ENCODE measurements at regions of chr9 and their contacts with region 1.

Region 1: GRCh38 chr9:19230356-19231125 is at the start of gene DENND4C:
- DNase-seq: peak; percentile 87
- ATAC-seq: peak; percentile 81
- H3K4me3 Mint-ChIP-seq: no peak within 1 kb of the TSS
- H3K27ac Mint-ChIP-seq: peak within 1 kb of the TSS; percentile 58
- H3K4me1 Mint-ChIP-seq: peaks cover 14% of the 10 kb centered on the region
- H3K27me3 Mint-ChIP-seq: no peaks in the 10 kb centered on the region
- total RNA-seq, gene DENND4C: 17.2 to 22.2 TPM

Region 2: GRCh38 chr9:19057033-19057432 is 173.5 kb before region 1 on chr9:
- CTCF ChIA-PET with region 1: no interaction called
- POLR2A ChIA-PET with region 1: interaction called, 15 read pairs
- intact Hi-C with region 1: no loop called
- DNase-seq: no peak
- ATAC-seq: no peak
- H3K4me3 Mint-ChIP-seq: no peak overlapping the region
- H3K27ac Mint-ChIP-seq: no peak overlapping the region
- H3K4me1 Mint-ChIP-seq: peaks cover 8% of the 10 kb centered on the region
- H3K27me3 Mint-ChIP-seq: no peaks in the 10 kb centered on the region

Region 3: GRCh38 chr9:19154135-19154612 is 76.4 kb before region 1 on chr9:
- CTCF ChIA-PET with region 1: interaction called, 4 read pairs
- POLR2A ChIA-PET with region 1: interaction called, 12 read pairs
- intact Hi-C with region 1: loop called in 1 of 2 experiments (anchors 2 kb)
- DNase-seq: no peak
- ATAC-seq: peak; percentile 25
- H3K4me3 Mint-ChIP-seq: peak overlapping the region; percentile 2
- H3K27ac Mint-ChIP-seq: peak overlapping the region; percentile 78
- H3K4me1 Mint-ChIP-seq: peaks cover 36% of the 10 kb centered on the region
- H3K27me3 Mint-ChIP-seq: no peaks in the 10 kb centered on the region

Region 4: DNA sequence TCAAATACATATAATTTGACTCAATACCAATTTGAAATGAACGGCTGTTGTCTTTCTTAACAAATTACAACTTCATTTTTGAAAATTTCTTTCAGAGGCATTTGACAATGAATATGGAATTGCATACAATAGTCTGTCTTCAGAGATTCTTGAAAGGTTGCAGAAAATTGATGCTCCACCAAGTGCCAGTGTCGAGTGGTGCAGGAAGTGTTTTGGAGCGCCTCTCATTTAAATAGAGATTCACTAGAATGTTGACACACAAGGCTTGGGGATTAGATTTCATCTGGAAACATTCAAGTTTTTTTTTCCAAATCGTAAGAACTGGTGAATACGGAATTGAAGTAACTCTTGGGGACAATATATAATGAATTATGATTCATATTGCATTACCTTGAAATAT is 141.4 kb after region 1 on chr9:
- CTCF ChIA-PET with region 1: no interaction called
- POLR2A ChIA-PET with region 1: no interaction called
- intact Hi-C with region 1: loop called in 1 of 2 experiments (anchors 2 kb)
- DNase-seq: no peak
- ATAC-seq: no peak
- H3K4me3 Mint-ChIP-seq: no peak overlapping the region
- H3K27ac Mint-ChIP-seq: peak overlapping the region; percentile 31
- H3K4me1 Mint-ChIP-seq: peaks cover 14% of the 10 kb centered on the region
- H3K27me3 Mint-ChIP-seq: no peaks in the 10 kb centered on the region

Region 5: DNA sequence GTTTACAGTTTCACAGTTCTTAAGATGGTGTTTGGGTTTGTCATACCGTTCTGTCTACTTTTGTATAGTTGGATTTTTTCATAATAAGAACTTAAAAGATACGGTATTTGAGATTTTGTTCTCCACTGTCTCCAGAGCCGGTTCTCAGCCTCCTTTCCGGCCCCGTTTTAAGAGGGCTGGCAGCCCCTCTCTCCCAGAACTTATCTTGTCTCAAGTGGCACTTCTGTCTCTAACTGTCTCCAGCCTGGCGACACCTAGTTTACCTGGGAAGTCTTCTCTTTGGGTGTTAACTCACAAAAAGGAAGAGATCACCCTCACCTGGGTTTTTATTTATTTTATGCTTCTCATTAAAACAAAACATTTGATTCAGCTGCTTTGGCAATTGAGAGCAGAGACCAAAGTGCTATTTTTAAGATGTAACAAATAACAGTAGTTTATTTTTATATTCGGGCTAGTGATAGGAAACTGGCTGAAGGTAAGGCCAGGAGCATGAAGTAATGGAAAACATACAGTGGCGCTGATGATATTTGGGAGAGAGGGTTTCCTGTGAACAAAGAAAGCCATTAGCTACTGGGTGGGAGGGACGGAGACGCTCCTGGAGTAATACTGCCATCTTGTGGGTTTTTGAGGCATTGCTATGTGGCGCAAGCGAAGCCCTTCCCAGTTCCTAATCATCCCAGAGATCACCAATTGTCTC is 226.6 kb after region 1 on chr9:
- CTCF ChIA-PET with region 1: no interaction called
- POLR2A ChIA-PET with region 1: no interaction called
- intact Hi-C with region 1: loop called (anchors 1 to 5 kb)
- DNase-seq: peak; percentile 76
- ATAC-seq: peak; percentile 92
- H3K4me3 Mint-ChIP-seq: no peak overlapping the region
- H3K27ac Mint-ChIP-seq: no peak overlapping the region
- H3K4me1 Mint-ChIP-seq: peaks cover 9% of the 10 kb centered on the region
- H3K27me3 Mint-ChIP-seq: no peaks in the 10 kb centered on the region

Measured in activated CD4-positive, alpha-beta T cell treated with anti-CD3 and anti-CD28 coated beads for 36 hours (primary cell).